A549 (cell line): ENCODE measurements at regions of chr17 and their contacts with region 1.

Region 1: DNA sequence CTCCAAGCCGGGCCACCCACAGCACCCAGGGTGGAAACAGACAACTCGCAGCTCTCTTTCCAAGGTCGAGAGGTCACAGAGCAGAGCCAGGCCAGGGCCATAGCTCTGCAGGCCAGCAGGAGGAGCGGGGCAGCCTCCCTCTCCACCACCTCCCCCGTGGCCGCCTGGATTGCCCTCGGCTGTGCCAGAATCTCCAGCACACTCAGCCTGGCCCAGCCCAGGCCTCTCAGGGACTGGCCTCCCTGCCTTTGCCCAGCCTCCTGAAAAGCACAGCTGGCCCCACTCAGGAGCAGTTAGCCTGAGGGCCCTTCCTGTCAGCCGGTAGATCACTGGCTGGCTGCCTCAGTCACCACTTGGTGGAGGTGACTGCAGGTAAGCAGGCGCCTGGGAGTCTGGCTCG is 85.8 kb upstream of the SEC14L1 start:
- DNase-seq: no peak
- ATAC-seq: peak; percentile 27 to 39; a peak in 5 of 6 replicates
- H3K4me3 ChIP-seq: no peak overlapping the region
- H3K27ac ChIP-seq: peak overlapping the region; percentile 26 to 86; a peak in 5 of 6 replicates
- H3K4me1 ChIP-seq: peaks cover 14% of the 10 kb centered on the region
- CTCF ChIP-seq: no peak
- EP300 ChIP-seq: no peak
- POLR2A ChIP-seq: no peak
- RAD21 ChIP-seq: no peak

Region 2: DNA sequence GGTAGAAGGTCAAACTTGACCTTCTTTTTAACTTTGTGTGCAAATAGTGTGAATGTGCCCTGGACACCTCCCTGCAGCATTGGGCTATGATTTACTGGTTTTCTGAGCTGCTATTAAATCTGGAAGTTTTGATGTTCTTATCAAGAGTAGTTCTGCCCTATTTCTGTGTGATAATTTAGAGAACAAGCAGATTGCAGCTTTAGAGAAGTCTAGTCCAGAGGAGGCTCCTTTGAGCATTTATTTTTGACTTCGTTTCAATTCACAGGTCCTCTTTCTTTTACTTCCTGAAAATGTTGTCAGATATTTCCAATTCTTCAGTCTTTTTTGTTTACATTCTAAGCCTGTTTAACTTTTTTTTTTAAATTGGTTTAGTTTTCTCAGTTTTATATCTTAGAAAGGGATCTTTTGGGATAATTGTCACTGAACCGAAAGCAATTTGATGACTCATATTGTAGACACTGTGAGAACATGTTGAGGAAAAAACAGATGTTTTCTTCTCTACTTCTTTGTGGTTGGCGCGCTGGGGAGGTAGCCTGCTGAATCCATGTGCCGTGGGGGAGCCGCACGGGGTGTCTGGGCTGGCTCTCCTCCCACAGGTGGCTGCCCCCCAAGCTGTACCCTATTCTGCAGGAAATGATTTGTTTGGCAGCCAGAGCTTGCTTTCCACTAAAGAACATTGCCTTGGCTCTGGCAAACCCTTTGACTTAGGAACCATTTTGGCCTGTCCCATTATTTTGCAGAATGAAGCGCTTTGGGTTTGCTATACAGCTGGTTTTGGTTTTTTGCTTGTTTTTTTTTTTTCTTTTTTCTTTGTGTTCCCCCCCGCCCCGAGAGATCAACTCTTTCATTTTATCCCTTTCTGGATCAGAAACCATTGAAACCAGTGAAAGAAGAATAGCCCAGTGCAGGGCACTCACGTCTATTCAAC is 263.6 kb before region 1 on chr17:
- CTCF ChIA-PET with region 1: interaction called, 13 read pairs
- POLR2A ChIA-PET with region 1: no interaction called
- DNase-seq: peak; percentile 34 to 41
- ATAC-seq: peak; percentile 56 to 63; a peak in 4 of 6 replicates
- H3K4me3 ChIP-seq: no peak overlapping the region
- H3K27ac ChIP-seq: peak overlapping the region in 1 of 2 experiments; percentile 72; a peak in 3 of 6 replicates
- H3K4me1 ChIP-seq: peaks cover 16% of the 10 kb centered on the region; the same call in 2 of the 3 replicates
- CTCF ChIP-seq: no peak
- EP300 ChIP-seq: no peak
- POLR2A ChIP-seq: no peak
- RAD21 ChIP-seq: no peak

Region 3: DNA sequence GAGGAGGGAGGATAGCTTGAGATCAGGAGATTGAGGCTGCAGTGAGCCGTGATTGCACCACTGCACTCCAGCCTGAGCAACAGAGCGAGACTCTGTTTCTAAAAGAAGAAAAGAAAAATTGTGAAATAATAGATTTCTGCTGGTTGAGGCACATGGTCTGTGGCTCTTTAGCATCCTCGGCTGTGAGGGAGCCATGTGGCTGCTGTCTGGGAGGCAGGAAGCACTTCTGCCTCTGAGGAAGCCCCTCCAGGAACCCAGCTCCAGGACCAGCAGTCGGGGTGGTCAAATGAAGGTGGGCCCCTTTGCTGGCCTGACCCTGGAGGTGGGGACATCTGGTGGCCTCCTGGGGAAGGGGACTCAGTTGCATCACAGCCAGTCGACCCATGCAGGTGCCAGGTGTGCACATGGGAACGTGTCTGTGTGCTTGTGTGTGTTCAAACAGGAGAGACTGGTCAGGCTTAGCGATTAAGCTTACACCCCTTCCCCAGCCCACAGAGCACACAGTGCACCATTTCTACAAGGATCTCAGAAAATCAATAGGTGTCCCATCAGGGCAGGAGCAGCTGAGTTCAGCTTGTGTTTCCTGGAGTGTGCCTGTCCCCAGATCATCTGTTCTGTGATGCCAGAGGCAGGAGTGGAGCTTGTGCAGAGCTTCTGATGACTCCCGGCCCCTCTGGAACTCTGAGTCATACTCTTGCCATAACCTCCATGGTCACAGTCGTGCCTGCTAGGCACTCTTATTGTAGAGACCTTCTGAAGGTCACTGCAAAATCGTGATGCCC is 211.0 kb before region 1 on chr17:
- CTCF ChIA-PET with region 1: interaction called, 10 read pairs
- POLR2A ChIA-PET with region 1: no interaction called
- DNase-seq: peak in 1 of 2 experiments; percentile 33
- ATAC-seq: peak; percentile 14 to 23; a peak in 4 of 6 replicates
- H3K4me3 ChIP-seq: no peak overlapping the region
- H3K27ac ChIP-seq: no peak overlapping the region
- H3K4me1 ChIP-seq: peaks cover 33% of the 10 kb centered on the region
- CTCF ChIP-seq: no peak
- EP300 ChIP-seq: no peak
- POLR2A ChIP-seq: no peak
- RAD21 ChIP-seq: no peak

Region 4: GRCh38 chr17:76887802-76888201 is 167.1 kb before region 1 on chr17:
- CTCF ChIA-PET with region 1: interaction called, 42 read pairs
- POLR2A ChIA-PET with region 1: no interaction called
- DNase-seq: no peak
- ATAC-seq: peak; percentile 18 to 46; a peak in 2 of 6 replicates
- H3K4me3 ChIP-seq: no peak overlapping the region
- H3K27ac ChIP-seq: no peak overlapping the region
- H3K4me1 ChIP-seq: no peaks in the 10 kb centered on the region
- CTCF ChIP-seq: no peak
- EP300 ChIP-seq: no peak
- POLR2A ChIP-seq: no peak
- RAD21 ChIP-seq: peak in 1 of 2 experiments; percentile 32; a peak in 1 of 5 replicates

Region 5: DNA sequence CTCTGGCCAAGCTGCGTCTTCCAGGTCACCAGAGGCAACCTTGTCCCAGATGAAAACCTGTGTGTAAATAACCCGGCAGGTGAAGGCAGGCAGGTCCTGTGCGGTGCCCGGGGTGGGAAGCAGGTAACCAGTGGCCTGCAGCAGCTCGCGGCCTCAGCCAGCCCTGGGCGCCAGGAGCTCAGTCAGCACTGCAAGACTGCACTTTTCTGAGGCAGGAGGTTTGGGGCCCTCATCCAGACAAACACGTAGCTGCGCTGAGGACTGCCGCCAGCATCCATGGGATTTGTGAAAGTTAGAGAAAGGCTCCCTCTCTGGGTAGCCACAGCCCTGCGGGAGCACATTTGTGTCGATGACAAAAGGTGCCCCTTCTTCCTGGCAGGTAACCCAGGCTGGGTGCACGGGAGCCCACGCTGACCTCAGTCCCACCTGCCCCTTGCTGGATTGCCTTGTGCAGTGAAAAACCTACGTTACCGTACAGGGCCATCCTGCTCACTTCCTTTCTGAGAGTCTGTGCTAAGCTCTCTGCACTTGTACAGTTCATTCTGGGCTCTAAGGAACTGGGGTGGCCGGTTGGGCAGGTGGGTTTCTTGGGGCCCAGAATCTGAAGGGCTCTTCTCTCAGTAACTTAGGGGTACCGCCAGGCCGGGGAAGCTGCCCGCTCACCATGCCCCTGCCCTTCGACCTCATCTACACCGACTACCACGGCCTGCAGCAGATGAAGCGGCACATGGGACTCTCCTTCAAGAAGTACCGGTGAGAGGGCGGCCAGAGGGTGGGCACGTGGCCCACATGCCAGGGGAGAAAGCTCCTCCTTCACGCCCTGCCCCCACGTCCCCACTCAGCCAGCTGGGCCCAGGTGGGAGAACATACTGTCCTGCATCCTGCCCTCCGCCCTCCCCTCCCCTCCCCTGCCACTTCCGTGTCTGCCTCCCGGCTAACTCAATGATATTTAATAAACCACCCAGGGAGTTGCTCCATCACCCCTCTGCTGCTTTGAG is 130.3 kb before region 1 on chr17:
- CTCF ChIA-PET with region 1: interaction called, 19 read pairs
- POLR2A ChIA-PET with region 1: no interaction called
- DNase-seq: peak in 1 of 2 experiments; percentile 24
- ATAC-seq: peak; percentile 3 to 47; a peak in 3 of 6 replicates
- H3K4me3 ChIP-seq: no peak overlapping the region
- H3K27ac ChIP-seq: peak overlapping the region in 1 of 2 experiments; percentile 26; a peak in 2 of 6 replicates
- H3K4me1 ChIP-seq: peaks cover 5% of the 10 kb centered on the region; the same call in 1 of the 3 replicates
- CTCF ChIP-seq: no peak
- EP300 ChIP-seq: no peak
- POLR2A ChIP-seq: no peak
- RAD21 ChIP-seq: no peak

Region 6: GRCh38 chr17:76983075-76983775 is 71.7 kb before region 1 on chr17:
- CTCF ChIA-PET with region 1: interaction called, 14 read pairs
- POLR2A ChIA-PET with region 1: no interaction called
- DNase-seq: no peak
- ATAC-seq: peak in 1 of 2 experiments; percentile 52; a peak in 3 of 6 replicates
- H3K4me3 ChIP-seq: no peak overlapping the region
- H3K27ac ChIP-seq: peak overlapping the region in 1 of 2 experiments; percentile 59; a peak in 2 of 6 replicates
- H3K4me1 ChIP-seq: no peaks in the 10 kb centered on the region
- CTCF ChIP-seq: no peak
- EP300 ChIP-seq: no peak
- POLR2A ChIP-seq: no peak
- RAD21 ChIP-seq: no peak

Region 7: GRCh38 chr17:77036807-77037381 is 18.0 kb before region 1 on chr17:
- CTCF ChIA-PET with region 1: interaction called, 84 read pairs
- POLR2A ChIA-PET with region 1: no interaction called
- DNase-seq: no peak
- ATAC-seq: peak; percentile 11 to 29; a peak in 2 of 6 replicates
- H3K4me3 ChIP-seq: no peak overlapping the region
- H3K27ac ChIP-seq: no peak overlapping the region
- H3K4me1 ChIP-seq: no peaks in the 10 kb centered on the region
- CTCF ChIP-seq: no peak
- EP300 ChIP-seq: no peak
- POLR2A ChIP-seq: no peak
- RAD21 ChIP-seq: no peak

Region 8: GRCh38 chr17:77264618-77265230 is 209.8 kb after region 1 on chr17:
- CTCF ChIA-PET with region 1: no interaction called
- POLR2A ChIA-PET with region 1: no interaction called
- DNase-seq: no peak
- ATAC-seq: no peak
- H3K4me3 ChIP-seq: no peak overlapping the region
- H3K27ac ChIP-seq: no peak overlapping the region
- H3K4me1 ChIP-seq: no peaks in the 10 kb centered on the region
- CTCF ChIP-seq: no peak
- EP300 ChIP-seq: no peak
- POLR2A ChIP-seq: no peak
- RAD21 ChIP-seq: no peak